Calu3 (cell line): ENCODE measurements at regions of chr18 and their contacts with region 1.

Region 1: DNA sequence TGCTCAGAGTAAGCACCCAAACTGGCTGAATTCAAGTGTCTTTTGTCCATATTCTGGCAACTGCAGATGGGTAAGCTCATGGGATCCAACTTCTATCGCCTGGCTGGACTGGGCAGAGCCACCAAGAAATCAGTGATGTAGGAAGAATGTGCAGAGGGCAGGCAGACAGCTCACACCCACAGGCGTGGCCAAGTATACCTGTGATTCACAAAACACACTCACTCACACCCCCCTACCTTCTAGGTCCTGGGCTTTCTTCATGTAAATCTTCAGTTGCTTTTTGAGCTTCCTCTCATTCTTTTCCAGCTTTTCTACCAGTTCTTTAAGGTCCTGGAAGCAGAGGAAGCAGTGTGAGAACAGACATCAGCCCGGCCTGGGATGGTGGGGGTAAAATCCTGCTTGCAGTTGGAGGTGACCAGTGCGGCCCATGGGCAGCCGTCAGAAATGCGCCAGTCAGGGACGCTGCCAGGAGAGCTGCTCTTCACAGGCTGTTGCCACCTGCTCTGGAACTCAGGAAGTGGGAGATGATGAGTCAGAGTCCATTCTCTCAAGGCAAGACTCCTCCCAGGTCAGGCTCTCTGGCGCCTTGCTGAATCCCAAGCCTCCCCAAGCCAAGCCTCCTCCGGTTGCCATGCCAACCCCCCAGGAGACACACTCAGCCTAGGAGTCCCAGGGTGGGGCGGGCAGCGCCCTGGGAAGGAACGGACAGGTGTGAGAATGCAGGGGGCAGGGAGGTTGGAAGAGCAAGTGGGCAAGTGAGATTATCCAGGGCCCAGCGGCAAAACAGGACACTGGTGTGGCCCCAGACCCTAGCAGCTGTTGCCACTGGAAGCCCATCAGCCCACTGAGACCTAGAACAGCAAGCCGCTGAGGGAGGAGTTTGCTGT is 36.2 kb upstream of the ACAA2 start:
- DNase-seq: peak; percentile 96
- H3K4me3 Mint-ChIP-seq: peak overlapping the region; percentile 66
- H3K27ac Mint-ChIP-seq: peak overlapping the region; percentile 97
- H3K4me1 Mint-ChIP-seq: peaks cover 40% of the 10 kb centered on the region
- H3K27me3 Mint-ChIP-seq: no peaks in the 10 kb centered on the region
- CTCF ChIP-seq: no peak

Region 2: GRCh38 chr18:49834258-49834657 is 15.3 kb before region 1 on chr18:
- CTCF ChIA-PET with region 1: interaction called, 9 read pairs
- intact Hi-C with region 1: loop called (anchors 2 kb)
- DNase-seq: no peak
- H3K4me3 Mint-ChIP-seq: peak overlapping the region; percentile 25
- H3K27ac Mint-ChIP-seq: peak overlapping the region; percentile 64
- H3K4me1 Mint-ChIP-seq: peaks cover 48% of the 10 kb centered on the region
- H3K27me3 Mint-ChIP-seq: no peaks in the 10 kb centered on the region
- CTCF ChIP-seq: no peak